CD14-positive monocyte (primary cell): ENCODE measurements at regions of chr5 and their contacts with region 1.

Region 1: GRCh38 chr5:170538696-170539586 is 35.1 kb downstream of the KCNIP1 start:
- DNase-seq: peak; percentile 48 to 76 (median 54)
- H3K4me3 ChIP-seq: no peak overlapping the region
- H3K4me3 Mint-ChIP-seq: peak overlapping the region in 1 of 2 donors; percentile 64
- H3K27ac ChIP-seq: no peak overlapping the region
- H3K27ac Mint-ChIP-seq: peak overlapping the region in 6 of 7 donors; percentile 25 to 69 (median 40)
- H3K4me1 ChIP-seq: peaks cover 19 to 24% of the 10 kb centered on the region in 2 donors
- H3K4me1 Mint-ChIP-seq: peaks cover 33% of the 10 kb centered on the region
- H3K27me3 ChIP-seq: no peaks in the 10 kb centered on the region
- H3K27me3 Mint-ChIP-seq: peaks cover 2 to 7% (median 3%) of the 10 kb centered on the region in 3 donors
- CTCF ChIP-seq: no peak

Region 2: DNA sequence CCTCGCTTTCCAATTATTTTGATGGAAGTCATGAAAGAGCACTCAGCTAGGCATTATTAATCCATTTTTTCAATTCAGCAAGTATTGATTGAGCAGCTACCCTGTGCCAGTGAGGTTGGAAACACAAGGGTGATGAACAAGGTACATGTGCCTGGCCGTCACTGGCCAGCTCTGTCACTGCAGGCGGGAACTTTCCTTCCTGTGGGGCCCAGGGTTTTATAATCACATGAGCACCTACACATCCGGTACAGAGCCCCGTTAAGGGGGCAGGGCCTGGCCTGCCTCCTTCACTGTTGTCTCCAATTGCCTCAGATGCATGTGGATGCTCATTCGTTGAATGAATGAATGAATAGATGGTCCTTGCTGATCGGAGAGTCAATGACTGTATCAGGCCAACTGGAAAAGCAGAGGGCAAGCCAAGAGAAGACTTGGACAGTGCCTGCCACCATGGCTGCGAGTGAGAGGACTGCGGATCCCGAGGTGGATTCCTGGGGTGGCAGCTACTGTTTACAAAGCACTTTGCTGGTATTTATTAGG is 93.9 kb before region 1 on chr5:
- intact Hi-C with region 1: loop called in 1 of 2 experiments (anchors 5 kb)
- DNase-seq: no peak
- H3K4me3 ChIP-seq: no peak overlapping the region
- H3K4me3 Mint-ChIP-seq: no peak overlapping the region
- H3K27ac ChIP-seq: no peak overlapping the region
- H3K27ac Mint-ChIP-seq: no peak overlapping the region
- H3K4me1 ChIP-seq: no peaks in the 10 kb centered on the region
- H3K4me1 Mint-ChIP-seq: peaks cover 5% of the 10 kb centered on the region
- H3K27me3 ChIP-seq: no peaks in the 10 kb centered on the region
- H3K27me3 Mint-ChIP-seq: peaks cover 0 to 5% (median 0%) of the 10 kb centered on the region in 3 donors
- CTCF ChIP-seq: no peak

Region 3: GRCh38 chr5:170597109-170597751 is 58.3 kb after region 1 on chr5:
- intact Hi-C with region 1: no loop called
- DNase-seq: no peak
- H3K4me3 ChIP-seq: no peak overlapping the region
- H3K4me3 Mint-ChIP-seq: no peak overlapping the region
- H3K27ac ChIP-seq: no peak overlapping the region
- H3K27ac Mint-ChIP-seq: peak overlapping the region in 1 of 7 donors; percentile 16
- H3K4me1 ChIP-seq: no peaks in the 10 kb centered on the region
- H3K4me1 Mint-ChIP-seq: no peaks in the 10 kb centered on the region
- H3K27me3 ChIP-seq: peaks cover 0 to 17% of the 10 kb centered on the region in 2 donors
- H3K27me3 Mint-ChIP-seq: peaks cover 11 to 22% (median 20%) of the 10 kb centered on the region in 3 donors
- CTCF ChIP-seq: no peak